Stomach (tissue), 19 donors: ENCODE measurements at regions of chr10 and their contacts with region 1.

Region 1: GRCh38 chr10:13299437-13300287 is at the start of gene PHYH:
- DNase-seq: peak; percentile 94 to 97
- H3K4me3 ChIP-seq: peak within 1 kb of the TSS; percentile 73 to 91 (median 80)
- H3K27ac ChIP-seq: peak within 1 kb of the TSS; percentile 98 to 100 (median 98)
- H3K4me1 ChIP-seq: peaks cover 0 to 39% (median 25%) of the 10 kb centered on the region in 4 donors
- H3K27me3 ChIP-seq: no peaks in the 10 kb centered on the region
- CTCF ChIP-seq: peak in 2 of 7 experiments; percentile 4 to 18
- EP300 ChIP-seq: peak; percentile 26
- POLR2A ChIP-seq: peak in 1 of 4 donors; percentile 34
- total RNA-seq, gene PHYH: 0.58 to 20.9 (median 9.6) TPM

Region 2: DNA sequence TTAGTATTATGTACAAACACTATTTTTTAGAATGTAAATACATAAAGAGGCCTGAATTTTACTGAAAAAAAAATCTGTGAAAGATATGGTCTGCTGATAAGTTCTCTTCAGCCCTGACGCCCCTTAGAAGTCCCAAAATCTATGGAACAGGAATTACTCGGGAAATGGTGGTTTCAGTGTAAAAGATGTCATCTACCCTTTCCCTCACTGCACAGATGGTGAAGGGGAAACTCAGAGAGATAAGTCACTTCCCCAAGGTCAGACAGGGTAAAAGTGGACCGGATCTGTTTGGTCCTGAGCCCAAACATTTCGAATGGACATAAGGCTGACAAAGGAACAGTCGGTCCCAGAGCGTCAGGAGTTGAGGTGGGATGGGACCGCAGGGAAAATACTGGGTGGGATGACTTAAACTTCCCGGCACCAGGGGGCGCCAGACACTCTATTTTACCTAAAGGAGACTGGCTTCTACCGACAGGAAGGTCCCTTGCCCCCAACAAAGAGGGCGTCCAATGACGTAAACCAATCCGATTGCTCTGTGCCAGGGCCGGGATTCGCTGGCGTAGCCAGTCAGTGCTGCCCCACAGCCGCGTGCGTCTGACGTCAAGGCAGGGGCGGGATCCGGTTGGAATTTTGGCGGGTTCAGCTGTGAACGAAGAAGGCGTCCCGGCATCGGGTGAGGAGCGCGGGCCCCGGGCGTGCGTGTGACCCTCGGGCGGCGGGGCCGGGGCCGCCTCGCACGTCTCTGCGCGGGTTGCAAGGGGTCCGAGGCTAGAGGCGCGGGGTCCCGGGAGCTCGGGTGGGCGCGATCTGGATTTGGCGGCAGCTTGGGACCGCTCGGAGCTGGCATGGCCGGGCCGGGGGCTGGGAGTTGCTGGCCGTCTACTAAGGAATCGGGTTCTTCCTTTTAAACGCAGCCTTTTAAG is 138.5 kb before region 1 on chr10 and contains the start of gene MCM10:
- intact Hi-C with region 1: loop called (anchors 10 kb)
- DNase-seq: peak; percentile 98 to 100
- H3K4me3 ChIP-seq: peak within 1 kb of the TSS; percentile 44 to 59 (median 55)
- H3K27ac ChIP-seq: peak within 1 kb of the TSS in 2 of 5 donors; percentile 11 to 65
- H3K4me1 ChIP-seq: peaks cover 14 to 20% (median 18%) of the 10 kb centered on the region in 4 donors
- H3K27me3 ChIP-seq: no peaks in the 10 kb centered on the region
- CTCF ChIP-seq: peak in 5 of 7 experiments; percentile 64 to 96 (median 85)
- EP300 ChIP-seq: peak; percentile 15
- POLR2A ChIP-seq: no peak
- total RNA-seq, gene MCM10: 2.3 to 7.6 (median 4.6) TPM